ENCODE measurements at regions of chr17 and their contacts with region 1.

Region 1: GRCh38 chr17:17859909-17860765 is 23.4 kb upstream of the SREBF1 start:
- DNase-seq: peak; percentile 65 to 77 (median 75)
- ATAC-seq: peak; percentile 96
- H3K4me3 ChIP-seq: no peak overlapping the region
- H3K27ac ChIP-seq: no peak overlapping the region
- H3K4me1 ChIP-seq: peaks cover 0 to 5% of the 10 kb centered on the region in 2 experiments; a peak in 2 of 5 replicates
- H3K27me3 ChIP-seq: no peaks in the 10 kb centered on the region
- CTCF ChIP-seq: peak; percentile 83 to 87 (median 85)
- EP300 ChIP-seq: no peak
- POLR2A ChIP-seq: no peak
- RAD21 ChIP-seq: peak; percentile 90 to 96

Region 2: GRCh38 chr17:17675925-17676534 is 184.1 kb before region 1 on chr17:
- CTCF ChIA-PET with region 1: no interaction called
- POLR2A ChIA-PET with region 1: no interaction called
- in situ Hi-C with region 1: loop called (anchors 5 kb)
- intact Hi-C with region 1: loop called (anchors 2 kb)
- DNase-seq: no peak
- ATAC-seq: peak; percentile 45; the same call in 2 of the 3 replicates
- H3K4me3 ChIP-seq: no peak overlapping the region
- H3K27ac ChIP-seq: no peak overlapping the region
- H3K4me1 ChIP-seq: peaks cover 2 to 3% of the 10 kb centered on the region in 2 experiments; a peak in 3 of 5 replicates
- H3K27me3 ChIP-seq: 0 out of 5 replicates have a peak, but pooled peaks cover 0 to 6% of the 10 kb centered on the region in 2 experiments
- CTCF ChIP-seq: no peak
- EP300 ChIP-seq: no peak
- POLR2A ChIP-seq: no peak
- RAD21 ChIP-seq: no peak

Region 3: GRCh38 chr17:17812211-17813057 is 47.7 kb before region 1 on chr17:
- CTCF ChIA-PET with region 1: interaction called, 24 read pairs
- POLR2A ChIA-PET with region 1: interaction called, 4 read pairs
- in situ Hi-C with region 1: loop called (anchors 5 kb)
- intact Hi-C with region 1: loop called (anchors 1 kb)
- DNase-seq: peak; percentile 71 to 78 (median 74)
- ATAC-seq: peak; percentile 76
- H3K4me3 ChIP-seq: no peak overlapping the region
- H3K27ac ChIP-seq: peak overlapping the region; percentile 71; the same call in 2 of the 3 replicates
- H3K4me1 ChIP-seq: peaks cover 6 to 83% of the 10 kb centered on the region in 2 experiments; a peak in 4 of 5 replicates
- H3K27me3 ChIP-seq: no peaks in the 10 kb centered on the region
- CTCF ChIP-seq: peak; percentile 77 to 90 (median 84)
- EP300 ChIP-seq: no peak
- POLR2A ChIP-seq: 0 out of 2 replicates have a peak, but pooled peaks have one; percentile 30
- RAD21 ChIP-seq: peak; percentile 68 to 82

Region 4: DNA sequence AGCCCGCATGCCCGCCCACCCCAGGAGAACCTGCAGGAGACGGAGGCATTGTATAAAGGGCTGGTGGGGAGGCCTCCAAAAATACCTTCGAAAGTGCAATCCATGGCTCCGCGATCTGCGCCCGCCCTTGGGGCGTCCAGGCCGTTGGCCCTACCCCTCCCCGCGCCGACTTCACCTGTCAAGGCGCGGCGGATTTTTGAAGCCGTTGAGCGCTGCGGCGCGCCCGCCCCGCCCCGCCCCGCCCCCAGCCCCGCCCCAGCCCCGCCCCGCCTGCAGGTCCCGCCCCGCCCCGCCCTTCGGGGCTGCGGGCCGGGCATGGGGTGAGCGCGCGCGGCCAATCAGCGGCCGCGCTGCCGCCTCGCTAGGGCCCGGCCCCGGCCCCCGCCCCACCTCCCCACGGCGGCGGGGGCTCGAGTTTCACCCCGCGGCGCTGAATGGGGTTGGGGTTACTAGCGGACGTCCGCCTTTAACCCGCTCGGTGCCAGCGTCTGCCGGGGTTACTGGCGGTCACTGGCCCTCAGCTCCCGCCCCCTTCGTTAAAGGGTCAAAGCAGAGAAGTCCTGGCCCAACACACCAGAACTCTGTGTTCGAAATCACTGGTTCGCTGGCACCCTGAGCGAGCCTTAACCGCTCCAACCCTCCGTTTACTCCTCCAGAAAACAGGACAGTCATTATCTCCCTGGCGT is 36.6 kb before region 1 on chr17:
- CTCF ChIA-PET with region 1: no interaction called
- POLR2A ChIA-PET with region 1: interaction called, 3 read pairs
- in situ Hi-C with region 1: loop called (anchors 5 kb)
- intact Hi-C with region 1: no loop called
- DNase-seq: peak; percentile 89 to 98 (median 94)
- ATAC-seq: peak; percentile 86
- H3K4me3 ChIP-seq: peak overlapping the region; percentile 52
- H3K27ac ChIP-seq: peak overlapping the region; percentile 99
- H3K4me1 ChIP-seq: peaks cover 82 to 88% of the 10 kb centered on the region in 2 experiments
- H3K27me3 ChIP-seq: no peaks in the 10 kb centered on the region
- CTCF ChIP-seq: no peak
- EP300 ChIP-seq: no peak; the same call in none of the 2 replicates
- POLR2A ChIP-seq: no peak; the same call in 1 of the 2 replicates
- RAD21 ChIP-seq: no peak

Region 5: DNA sequence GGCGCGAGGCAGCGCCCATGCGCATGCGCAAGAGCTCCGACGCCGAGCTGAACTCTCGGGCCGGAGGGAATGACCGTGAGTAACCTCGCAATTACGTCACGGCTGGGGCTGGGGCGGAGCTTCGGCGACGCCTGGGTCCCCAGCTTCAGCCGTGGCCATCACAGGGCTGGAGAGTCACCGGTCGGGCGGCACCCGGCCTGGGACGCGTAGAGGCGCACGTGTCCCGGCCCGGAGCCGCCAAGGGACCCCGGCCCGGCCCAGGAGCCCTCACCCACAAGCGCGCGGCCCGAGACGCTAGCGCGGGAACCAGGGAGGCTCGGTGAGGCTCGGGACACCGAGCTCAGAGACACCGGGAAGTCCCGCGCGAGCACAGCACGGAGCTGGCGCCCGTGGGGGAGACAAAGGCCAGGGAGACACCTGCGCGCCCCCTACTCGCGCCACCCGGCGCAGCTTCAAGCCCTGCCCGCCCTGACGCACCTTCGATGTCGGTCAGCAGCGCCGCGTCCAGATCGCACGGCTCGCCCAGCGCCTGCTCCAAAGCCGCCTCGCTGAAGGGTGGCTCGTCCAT is 23.8 kb before region 1 on chr17:
- CTCF ChIA-PET with region 1: interaction called, 3 read pairs
- POLR2A ChIA-PET with region 1: interaction called, 10 read pairs
- in situ Hi-C with region 1: no loop called
- intact Hi-C with region 1: no loop called
- DNase-seq: peak; percentile 74 to 97 (median 85)
- ATAC-seq: peak; percentile 71
- H3K4me3 ChIP-seq: peak overlapping the region; percentile 94
- H3K27ac ChIP-seq: peak overlapping the region; percentile 100
- H3K4me1 ChIP-seq: peaks cover 57 to 69% of the 10 kb centered on the region in 2 experiments
- H3K27me3 ChIP-seq: no peaks in the 10 kb centered on the region
- CTCF ChIP-seq: no peak
- EP300 ChIP-seq: no peak; the same call in 1 of the 2 replicates
- POLR2A ChIP-seq: peak; percentile 93
- RAD21 ChIP-seq: no peak